ENCODE measurements at regions of chr5 and their contacts with region 1.

Region 1: GRCh38 chr5:60822285-60822556 is 21.8 kb downstream of the ELOVL7 start:
- DNase-seq: no peak
- H3K4me3 ChIP-seq: no peak overlapping the region
- H3K27ac ChIP-seq: no peak overlapping the region
- H3K4me1 ChIP-seq: no peaks in the 10 kb centered on the region
- H3K27me3 ChIP-seq: no peaks in the 10 kb centered on the region
- CTCF ChIP-seq: no peak
- POLR2A ChIP-seq: no peak

Region 2: GRCh38 chr5:62093976-62094375 is 1271.8 kb after region 1 on chr5:
- intact Hi-C with region 1: loop called (anchors 5 kb)
- DNase-seq: no peak
- H3K4me3 ChIP-seq: peak overlapping the region in 1 of 3 donors; percentile 37
- H3K27ac ChIP-seq: no peak overlapping the region
- H3K4me1 ChIP-seq: no peaks in the 10 kb centered on the region
- H3K27me3 ChIP-seq: no peaks in the 10 kb centered on the region
- CTCF ChIP-seq: no peak
- POLR2A ChIP-seq: no peak